A673 (cell line): ENCODE measurements at regions of chr1 and their contacts with region 1.

Region 1: GRCh38 chr1:216310776-216311175 is 112.5 kb downstream of the USH2A start:
- DNase-seq: peak; percentile 81
- H3K4me3 ChIP-seq: no peak overlapping the region
- H3K27ac ChIP-seq: no peak overlapping the region
- H3K4me1 ChIP-seq: no peaks in the 10 kb centered on the region
- H3K27me3 ChIP-seq: peaks cover 9% of the 10 kb centered on the region
- CTCF ChIP-seq: peak; percentile 74

Region 2: GRCh38 chr1:216293683-216294082 is 17.1 kb before region 1 on chr1:
- CTCF ChIA-PET with region 1: no interaction called
- POLR2A ChIA-PET with region 1: no interaction called
- intact Hi-C with region 1: no loop called
- DNase-seq: no peak
- H3K4me3 ChIP-seq: no peak overlapping the region
- H3K27ac ChIP-seq: no peak overlapping the region
- H3K4me1 ChIP-seq: no peaks in the 10 kb centered on the region
- H3K27me3 ChIP-seq: peaks cover 72% of the 10 kb centered on the region
- CTCF ChIP-seq: no peak

Region 3: DNA sequence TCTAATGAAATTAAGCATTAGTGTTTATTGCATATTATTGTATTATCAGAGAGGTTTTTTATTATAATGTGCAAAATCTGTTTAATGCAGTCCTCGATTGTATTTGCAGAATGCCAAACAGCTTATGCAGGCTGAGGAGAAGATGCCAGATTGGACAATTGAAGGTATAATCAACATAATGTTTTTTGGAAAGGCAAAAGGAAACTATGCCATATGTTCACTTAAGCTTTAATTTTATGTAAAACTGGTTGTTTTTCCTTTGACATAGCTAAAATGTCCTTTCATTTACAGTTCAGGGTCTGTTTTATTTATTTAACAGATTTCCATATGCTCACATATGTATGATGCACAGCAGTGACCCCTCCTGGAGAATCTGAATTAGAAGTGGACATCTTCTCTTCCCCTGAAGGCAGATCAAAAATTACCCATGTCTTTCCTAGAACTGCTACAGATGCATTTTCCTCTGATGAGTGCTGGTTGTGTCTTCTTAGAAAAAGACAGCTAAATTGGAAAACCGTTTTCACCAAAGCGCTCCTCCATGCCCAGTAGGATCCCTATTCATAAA is 255.9 kb after region 1 on chr1:
- CTCF ChIA-PET with region 1: no interaction called
- POLR2A ChIA-PET with region 1: no interaction called
- intact Hi-C with region 1: loop called (anchors 5 kb)
- DNase-seq: peak; percentile 41
- H3K4me3 ChIP-seq: no peak overlapping the region
- H3K27ac ChIP-seq: no peak overlapping the region
- H3K4me1 ChIP-seq: no peaks in the 10 kb centered on the region
- H3K27me3 ChIP-seq: peaks cover 66% of the 10 kb centered on the region
- CTCF ChIP-seq: peak; percentile 56

Region 4: DNA sequence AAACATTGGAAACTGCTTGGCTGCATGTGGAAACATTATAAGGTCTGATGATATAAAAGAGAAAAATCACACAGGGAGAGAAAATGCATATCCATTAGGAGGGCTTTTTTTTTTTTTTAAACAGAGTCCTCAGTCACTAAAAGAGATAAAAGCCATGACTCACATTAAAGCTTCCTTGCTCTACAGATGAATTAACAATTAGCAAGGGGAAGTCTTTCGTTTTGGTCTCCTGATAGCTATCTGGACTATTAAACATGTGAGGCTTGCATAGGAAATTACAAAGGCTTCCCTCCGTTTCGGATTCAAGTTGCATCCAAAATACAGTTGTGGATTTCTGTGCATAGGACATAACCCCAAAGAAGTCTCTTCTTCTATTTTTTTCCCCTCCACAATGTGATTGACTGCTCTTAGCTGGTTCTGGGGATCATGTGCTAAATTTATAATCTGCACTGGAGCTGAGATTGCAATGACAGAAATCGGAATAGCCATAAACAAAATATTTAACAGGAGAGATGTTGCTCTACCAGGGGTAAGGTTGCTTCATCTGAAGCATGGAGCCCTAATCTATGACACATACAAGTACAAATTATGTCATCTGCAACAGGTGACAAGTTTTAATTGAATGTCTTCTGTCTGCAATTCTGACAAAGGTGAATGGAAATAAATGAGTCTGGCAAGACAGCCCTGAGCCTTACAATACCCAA is 265.6 kb after region 1 on chr1:
- CTCF ChIA-PET with region 1: no interaction called
- POLR2A ChIA-PET with region 1: no interaction called
- intact Hi-C with region 1: loop called (anchors 5 kb)
- DNase-seq: peak; percentile 13
- H3K4me3 ChIP-seq: no peak overlapping the region
- H3K27ac ChIP-seq: no peak overlapping the region
- H3K4me1 ChIP-seq: no peaks in the 10 kb centered on the region
- H3K27me3 ChIP-seq: peaks cover 21% of the 10 kb centered on the region
- CTCF ChIP-seq: no peak

Region 5: GRCh38 chr1:216742625-216743024 is 431.8 kb after region 1 on chr1:
- CTCF ChIA-PET with region 1: no interaction called
- POLR2A ChIA-PET with region 1: no interaction called
- intact Hi-C with region 1: loop called (anchors 10 kb)
- DNase-seq: no peak
- H3K4me3 ChIP-seq: no peak overlapping the region
- H3K27ac ChIP-seq: no peak overlapping the region
- H3K4me1 ChIP-seq: no peaks in the 10 kb centered on the region
- H3K27me3 ChIP-seq: peaks cover 17% of the 10 kb centered on the region
- CTCF ChIP-seq: peak; percentile 41; the same call in 1 of the 2 replicates